ENCODE measurements at regions of chr20 and their contacts with region 1.

Region 1: DNA sequence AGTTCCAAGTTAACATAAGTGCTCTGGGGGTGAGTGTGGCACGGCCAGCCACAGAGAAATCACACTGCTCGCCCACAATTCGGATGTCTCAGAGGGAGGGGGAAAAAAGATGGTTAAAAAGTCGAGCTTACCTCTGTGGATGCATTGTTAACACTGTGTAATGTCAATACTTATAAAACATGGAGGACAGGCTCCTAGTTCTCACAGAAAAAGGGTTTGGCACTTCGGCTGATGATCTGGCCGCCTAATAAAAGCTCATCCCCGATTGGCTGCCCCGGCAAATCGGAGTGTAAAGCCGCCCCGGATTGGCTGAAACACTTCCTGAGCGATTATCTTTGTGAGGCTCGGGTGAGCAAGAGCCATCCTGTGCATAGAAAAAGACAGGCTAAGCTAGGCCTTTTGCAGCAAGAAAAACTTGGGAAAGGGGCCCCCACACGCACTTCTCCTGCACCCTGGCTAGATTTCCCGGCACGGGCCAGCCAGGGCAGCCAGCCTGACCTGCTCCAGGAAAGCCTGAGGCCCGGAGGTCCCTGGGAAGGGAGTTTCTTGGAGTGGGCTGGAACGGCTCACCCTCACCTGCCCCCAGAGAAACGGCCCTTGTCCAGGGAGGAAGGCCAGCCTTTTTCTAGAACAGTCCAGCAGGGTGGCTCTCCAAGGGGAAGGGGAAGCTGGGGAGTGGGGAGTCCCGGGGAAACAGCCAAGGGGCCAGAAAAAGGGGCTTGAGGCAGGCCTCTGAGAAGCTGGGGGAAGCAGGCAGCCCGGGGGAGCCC is at the start of gene ZMYND8:
- DNase-seq: peak; percentile 95
- ATAC-seq: peak; percentile 88
- H3K4me3 Mint-ChIP-seq: peak within 1 kb of the TSS; percentile 97
- H3K27ac Mint-ChIP-seq: peak within 1 kb of the TSS; percentile 95
- H3K4me1 Mint-ChIP-seq: peaks cover 42% of the 10 kb centered on the region
- H3K27me3 Mint-ChIP-seq: no peaks in the 10 kb centered on the region
- CTCF ChIP-seq: no peak
- total RNA-seq, gene ZMYND8: 31.9 to 33.4 TPM

Region 2: DNA sequence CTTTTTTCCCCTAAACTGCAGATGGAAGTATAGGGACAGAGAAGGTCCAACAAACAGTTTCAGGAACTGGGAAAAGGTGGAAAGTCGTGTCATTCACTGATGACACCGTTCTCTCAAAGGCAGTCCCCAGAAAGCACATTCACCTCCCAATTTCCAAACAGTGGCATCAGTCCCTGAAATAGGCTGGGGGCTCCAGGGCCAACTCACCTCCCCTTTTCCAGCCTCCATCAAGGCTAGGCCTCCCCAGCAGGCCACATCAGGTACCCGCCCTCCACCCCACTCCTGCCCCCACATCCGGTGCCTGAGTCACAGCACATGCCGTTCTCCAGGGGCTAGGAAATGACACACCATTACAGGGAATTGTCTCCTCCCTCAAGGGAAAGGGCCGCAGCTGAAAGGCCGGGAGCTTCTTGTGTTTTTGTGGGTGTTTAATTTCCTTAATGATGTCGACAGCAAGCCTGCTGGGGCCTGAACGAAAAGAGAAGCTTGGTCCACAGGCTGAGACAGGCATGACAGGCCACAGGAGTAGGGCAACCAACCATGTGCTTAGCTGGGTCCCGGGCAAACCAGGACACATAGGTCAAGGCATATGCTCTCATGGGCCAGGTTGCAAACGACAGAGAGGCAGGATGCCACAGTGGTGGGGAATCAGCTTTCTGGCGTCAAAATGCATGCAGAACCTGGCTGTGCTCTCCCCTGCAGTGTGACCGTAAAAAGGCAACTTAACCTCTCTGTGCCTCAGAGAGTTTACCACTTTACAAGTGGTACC is 39.4 kb before region 1 on chr20:
- CTCF ChIA-PET with region 1: no interaction called
- POLR2A ChIA-PET with region 1: interaction called, 4 read pairs
- intact Hi-C with region 1: loop called (anchors 5 kb)
- DNase-seq: peak; percentile 75
- ATAC-seq: peak; percentile 72
- H3K4me3 Mint-ChIP-seq: peak overlapping the region; percentile 57
- H3K27ac Mint-ChIP-seq: peak overlapping the region; percentile 94
- H3K4me1 Mint-ChIP-seq: peaks cover 66% of the 10 kb centered on the region
- H3K27me3 Mint-ChIP-seq: no peaks in the 10 kb centered on the region
- CTCF ChIP-seq: no peak

Region 3: DNA sequence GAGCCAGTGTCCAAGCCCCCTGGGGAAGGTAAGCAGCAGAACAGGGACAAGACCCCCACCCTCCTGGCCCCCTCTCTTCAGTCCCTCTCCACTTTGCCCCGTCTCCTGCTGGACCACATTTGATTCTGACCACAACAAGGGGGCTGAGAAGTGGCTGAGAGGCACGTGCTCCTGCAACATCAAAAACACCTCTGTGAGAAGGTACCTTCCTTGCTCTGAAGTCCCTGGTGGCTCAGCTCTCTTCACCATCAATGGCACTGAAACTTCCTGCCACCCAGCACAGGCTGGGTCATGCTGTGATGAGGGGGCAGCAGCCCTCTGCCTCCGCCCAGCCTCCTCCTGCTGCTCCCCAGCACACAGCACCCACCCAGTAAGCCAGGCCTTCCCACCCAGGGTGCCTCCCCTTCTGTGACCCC is 10.6 kb before region 1 on chr20:
- CTCF ChIA-PET with region 1: interaction called, 7 read pairs
- POLR2A ChIA-PET with region 1: interaction called, 11 read pairs
- intact Hi-C with region 1: no loop called
- DNase-seq: peak; percentile 30
- ATAC-seq: peak; percentile 69
- H3K4me3 Mint-ChIP-seq: no peak overlapping the region
- H3K27ac Mint-ChIP-seq: peak overlapping the region; percentile 68
- H3K4me1 Mint-ChIP-seq: peaks cover 8% of the 10 kb centered on the region
- H3K27me3 Mint-ChIP-seq: no peaks in the 10 kb centered on the region
- CTCF ChIP-seq: no peak

Region 4: DNA sequence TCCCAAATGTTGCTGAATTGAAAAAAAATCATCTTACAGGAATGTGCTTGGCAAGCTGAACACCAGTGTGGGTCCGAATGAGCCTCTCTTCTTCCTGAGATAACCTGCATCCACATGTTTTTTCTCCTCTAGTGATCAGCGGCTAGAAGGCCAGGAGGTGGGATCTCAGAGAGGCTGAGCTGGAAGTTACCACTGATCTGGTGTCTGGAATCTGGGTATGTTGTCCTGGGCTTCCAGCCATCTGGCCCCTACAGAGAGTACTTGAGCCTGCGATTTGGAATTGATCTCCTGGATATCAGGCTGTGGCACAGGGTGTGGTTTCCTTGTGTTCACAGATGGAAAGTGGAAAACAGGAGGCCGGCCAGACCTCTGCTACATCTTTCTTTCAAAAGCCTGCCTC is 392.6 kb after region 1 on chr20:
- CTCF ChIA-PET with region 1: no interaction called
- POLR2A ChIA-PET with region 1: no interaction called
- intact Hi-C with region 1: no loop called
- DNase-seq: no peak
- ATAC-seq: no peak
- H3K4me3 Mint-ChIP-seq: no peak overlapping the region
- H3K27ac Mint-ChIP-seq: no peak overlapping the region
- H3K4me1 Mint-ChIP-seq: peaks cover 9% of the 10 kb centered on the region
- H3K27me3 Mint-ChIP-seq: no peaks in the 10 kb centered on the region
- CTCF ChIP-seq: no peak

Region 5: GRCh38 chr20:48171689-48172366 is 815.1 kb after region 1 on chr20:
- CTCF ChIA-PET with region 1: no interaction called
- POLR2A ChIA-PET with region 1: no interaction called
- intact Hi-C with region 1: no loop called
- DNase-seq: no peak
- ATAC-seq: no peak
- H3K4me3 Mint-ChIP-seq: no peak overlapping the region
- H3K27ac Mint-ChIP-seq: no peak overlapping the region
- H3K4me1 Mint-ChIP-seq: no peaks in the 10 kb centered on the region
- H3K27me3 Mint-ChIP-seq: peaks cover 1% of the 10 kb centered on the region
- CTCF ChIP-seq: no peak

Measured in activated CD8-positive, alpha-beta T cell treated with anti-CD3 and anti-CD28 coated beads for 36 hours (primary cell).